Lower leg skin (tissue), 4 donors: ENCODE measurements at regions of chr1 and their contacts with region 1.

Region 1: DNA sequence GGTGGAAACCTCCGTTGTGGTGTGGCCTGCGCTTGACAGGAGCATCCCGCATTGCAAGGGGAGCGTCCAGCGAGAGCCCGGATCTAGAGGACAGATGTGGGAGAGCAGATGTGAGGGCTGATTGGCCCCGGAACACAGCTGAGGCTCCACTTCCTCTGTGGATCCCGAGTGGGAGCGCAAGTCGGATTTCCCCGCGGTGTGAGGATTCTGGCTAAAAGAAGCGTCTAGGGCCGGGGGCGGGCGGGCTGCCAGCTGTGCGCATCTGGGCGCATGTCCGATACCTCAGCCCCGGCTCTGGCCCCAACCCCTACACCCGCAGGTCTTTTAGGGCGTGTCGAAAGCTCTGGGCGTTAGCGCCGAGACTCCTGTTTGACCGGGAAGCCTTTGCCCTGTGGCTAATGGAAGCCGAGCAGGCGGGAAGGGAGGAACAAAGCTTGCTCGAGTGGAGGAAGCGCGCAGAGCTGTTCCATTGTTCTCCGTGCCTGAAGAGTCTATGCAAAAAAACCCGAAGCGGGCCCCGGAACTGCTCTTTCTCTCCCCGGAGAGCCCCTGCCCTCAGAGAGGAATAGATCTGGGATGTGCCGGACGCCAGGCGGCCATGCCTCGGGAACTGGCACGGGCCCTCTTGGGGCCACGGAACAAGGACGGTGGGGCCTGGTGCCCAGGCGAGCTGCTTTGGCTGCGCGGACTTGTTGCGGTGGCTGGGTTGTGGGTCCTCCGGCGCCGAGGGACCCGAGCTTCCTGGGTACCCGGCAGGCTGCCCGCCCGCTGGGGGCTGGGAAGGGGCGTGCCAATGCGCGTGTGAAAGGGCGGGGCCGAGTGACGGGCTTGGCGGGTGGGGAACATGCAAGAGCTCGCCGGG is 111.1 kb downstream of the NAV1 start:
- DNase-seq: peak; percentile 83 to 96
- H3K4me3 ChIP-seq: peak overlapping the region; percentile 18
- CTCF ChIP-seq: no peak
- POLR2A ChIP-seq: no peak

Region 2: DNA sequence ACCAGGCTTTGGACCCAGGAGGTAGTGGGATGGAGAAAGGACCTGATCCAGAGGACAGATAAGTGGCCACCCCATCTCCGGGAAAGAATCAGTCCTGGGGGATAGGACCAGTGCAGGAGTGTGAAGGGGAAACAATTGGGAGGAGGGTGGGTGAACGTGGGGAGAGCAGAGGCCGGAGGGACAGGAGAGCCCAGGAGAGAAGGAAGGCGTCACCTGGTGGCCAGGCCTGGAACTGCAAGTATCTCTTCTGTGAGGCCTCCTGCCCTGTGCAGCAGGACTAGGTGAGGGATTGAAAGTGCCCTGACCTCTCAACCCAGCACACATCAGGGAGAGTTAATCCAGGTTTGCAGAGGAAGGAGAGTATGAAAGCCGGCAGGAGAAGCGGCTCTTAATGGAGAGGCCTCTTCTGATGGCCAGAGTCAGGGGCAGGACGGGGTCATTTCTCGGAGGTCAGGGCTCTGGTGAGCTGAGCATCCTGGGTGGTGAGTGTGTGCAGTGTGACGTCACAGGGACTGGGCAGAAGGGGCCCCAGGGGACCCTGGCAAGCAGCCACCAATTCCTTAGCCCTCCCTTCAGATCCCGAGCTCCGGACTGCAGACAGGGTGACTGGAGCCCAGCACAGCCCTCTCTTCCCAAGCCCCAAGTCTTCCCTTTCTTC is 241.7 kb before region 1 on chr1:
- intact Hi-C with region 1: no loop called
- DNase-seq: peak; percentile 72 to 96
- H3K4me3 ChIP-seq: no peak overlapping the region
- CTCF ChIP-seq: no peak
- POLR2A ChIP-seq: no peak

Region 3: GRCh38 chr1:201593200-201593921 is 56.6 kb before region 1 on chr1:
- intact Hi-C with region 1: loop called (anchors 10 kb)
- DNase-seq: peak; percentile 79 to 89
- H3K4me3 ChIP-seq: no peak overlapping the region
- CTCF ChIP-seq: no peak
- POLR2A ChIP-seq: no peak